Esophagus muscularis mucosa (tissue), 4 donors: ENCODE measurements at regions of chr4 and their contacts with region 1.

Region 1: DNA sequence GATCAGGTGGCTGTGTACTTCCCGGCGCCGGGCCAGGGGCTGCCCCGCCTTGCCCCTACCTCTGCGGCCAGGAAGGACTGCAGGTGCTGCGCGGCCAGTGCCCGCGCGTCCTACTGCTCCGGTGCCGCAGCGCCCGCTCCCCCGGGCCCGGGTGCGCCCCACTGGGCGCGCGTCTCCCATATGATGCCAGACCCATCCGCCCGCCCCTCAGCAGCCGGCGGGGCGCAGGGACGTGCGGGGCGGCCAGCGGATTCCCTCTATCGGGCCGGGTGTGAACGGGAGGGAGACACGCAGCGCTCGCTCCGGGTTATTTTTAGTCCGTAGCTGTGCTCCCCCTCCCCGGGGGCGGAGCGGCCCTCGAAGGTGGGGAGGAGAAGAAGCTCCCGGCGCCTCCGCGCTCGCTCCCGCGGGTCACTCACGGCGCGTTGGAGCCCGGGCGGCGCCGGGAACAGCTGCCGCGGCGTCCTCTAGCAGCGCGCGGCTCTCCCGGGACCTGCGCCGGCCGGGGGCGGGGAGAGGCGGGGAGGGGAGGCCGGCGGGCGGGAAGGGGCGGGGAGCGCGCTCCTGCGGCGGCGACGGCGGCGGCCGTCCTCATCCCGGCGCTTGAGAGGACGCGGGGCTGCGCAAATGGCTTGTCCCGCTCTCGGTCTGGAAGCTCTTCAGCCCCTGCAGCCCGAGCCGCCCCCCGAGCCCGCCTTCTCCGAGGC is 103.6 kb downstream of the UCHL1 start:
- DNase-seq: no peak
- H3K4me3 ChIP-seq: peak overlapping the region; percentile 66 to 95 (median 90)
- H3K27ac ChIP-seq: peak overlapping the region; percentile 85 to 92 (median 88)
- H3K4me1 ChIP-seq: peaks cover 30 to 61% (median 56%) of the 10 kb centered on the region in 4 donors
- H3K27me3 ChIP-seq: no peaks in the 10 kb centered on the region
- CTCF ChIP-seq: peak in 2 of 3 experiments; percentile 3 to 5
- EP300 ChIP-seq: no peak
- POLR2A ChIP-seq: no peak

Region 2: DNA sequence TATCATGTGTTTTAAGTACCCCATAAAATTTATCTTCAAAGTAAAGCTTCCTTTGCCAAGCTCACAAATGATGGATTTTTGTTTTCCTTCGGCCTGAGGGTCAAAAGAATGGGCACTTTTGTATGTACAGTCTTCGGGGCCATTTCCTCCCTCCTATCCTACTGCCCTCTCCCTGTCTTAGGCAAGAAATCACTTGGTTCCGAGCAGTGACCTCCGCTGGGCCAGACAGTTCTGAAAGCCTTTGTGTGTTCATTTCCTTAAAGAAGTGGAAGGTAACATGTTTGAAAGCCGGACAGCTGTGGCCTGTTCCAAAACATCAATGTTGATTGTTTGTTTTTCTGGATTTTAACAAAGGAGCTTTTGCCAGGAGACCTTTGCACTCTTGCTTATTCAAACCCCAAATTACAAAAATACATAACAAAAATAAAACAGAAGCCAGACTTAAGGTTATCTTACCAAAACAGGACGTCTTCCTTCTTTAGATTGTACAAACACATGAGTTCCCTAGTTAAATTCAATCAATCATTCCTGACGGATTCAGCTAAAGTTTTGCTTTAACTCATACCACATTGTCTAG is 67.0 kb after region 1 on chr4:
- intact Hi-C with region 1: loop called (anchors 5 kb)
- DNase-seq: no peak
- H3K4me3 ChIP-seq: no peak overlapping the region
- H3K27ac ChIP-seq: peak overlapping the region; percentile 79 to 82 (median 80)
- H3K4me1 ChIP-seq: peaks cover 63 to 89% (median 82%) of the 10 kb centered on the region in 4 donors
- H3K27me3 ChIP-seq: no peaks in the 10 kb centered on the region
- CTCF ChIP-seq: no peak
- EP300 ChIP-seq: no peak
- POLR2A ChIP-seq: no peak

Region 3: DNA sequence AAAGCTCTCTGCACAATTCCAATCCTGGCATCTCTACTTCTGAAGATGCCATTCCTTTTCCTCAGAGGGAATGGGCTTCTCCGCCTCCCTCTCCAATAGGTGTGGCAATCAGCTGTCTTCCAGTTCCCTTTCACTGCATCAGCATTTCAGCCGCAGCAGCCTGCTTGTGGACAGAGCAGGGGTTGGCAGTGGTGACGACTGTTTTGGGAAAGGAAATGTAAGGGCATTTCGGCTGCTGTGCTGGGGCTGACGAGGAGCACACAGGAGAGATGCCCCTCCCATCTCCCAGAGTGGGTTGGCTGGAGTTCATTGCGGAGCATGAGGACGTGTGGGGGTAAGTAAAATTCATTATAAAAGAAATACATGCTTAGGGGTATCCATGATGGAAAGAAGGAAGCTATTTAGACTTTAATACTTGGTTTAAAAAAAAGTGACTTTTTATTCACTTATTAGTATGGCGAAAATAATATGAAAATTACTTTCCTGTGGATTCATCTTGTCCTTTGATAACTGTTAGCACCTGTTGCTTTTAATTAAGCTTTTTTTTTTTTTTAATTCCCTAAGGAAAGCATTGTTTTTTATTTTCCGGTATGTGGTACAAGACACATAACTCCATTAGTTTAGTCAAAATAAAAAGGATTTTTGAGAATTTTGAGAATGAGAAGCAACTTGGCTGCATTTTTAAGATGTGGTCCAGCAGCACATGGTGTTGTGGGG is 177.8 kb after region 1 on chr4 and contains the start of gene LIMCH1:
- intact Hi-C with region 1: loop called (anchors 5 kb)
- DNase-seq: peak; percentile 94
- H3K4me3 ChIP-seq: peak within 1 kb of the TSS; percentile 10 to 35 (median 28)
- H3K27ac ChIP-seq: peak within 1 kb of the TSS; percentile 69 to 78 (median 74)
- H3K4me1 ChIP-seq: peaks cover 53 to 67% (median 59%) of the 10 kb centered on the region in 4 donors
- H3K27me3 ChIP-seq: no peaks in the 10 kb centered on the region
- CTCF ChIP-seq: no peak
- EP300 ChIP-seq: no peak
- POLR2A ChIP-seq: no peak
- total RNA-seq, gene LIMCH1: 49.0 to 101 (median 72.1) TPM

Region 4: DNA sequence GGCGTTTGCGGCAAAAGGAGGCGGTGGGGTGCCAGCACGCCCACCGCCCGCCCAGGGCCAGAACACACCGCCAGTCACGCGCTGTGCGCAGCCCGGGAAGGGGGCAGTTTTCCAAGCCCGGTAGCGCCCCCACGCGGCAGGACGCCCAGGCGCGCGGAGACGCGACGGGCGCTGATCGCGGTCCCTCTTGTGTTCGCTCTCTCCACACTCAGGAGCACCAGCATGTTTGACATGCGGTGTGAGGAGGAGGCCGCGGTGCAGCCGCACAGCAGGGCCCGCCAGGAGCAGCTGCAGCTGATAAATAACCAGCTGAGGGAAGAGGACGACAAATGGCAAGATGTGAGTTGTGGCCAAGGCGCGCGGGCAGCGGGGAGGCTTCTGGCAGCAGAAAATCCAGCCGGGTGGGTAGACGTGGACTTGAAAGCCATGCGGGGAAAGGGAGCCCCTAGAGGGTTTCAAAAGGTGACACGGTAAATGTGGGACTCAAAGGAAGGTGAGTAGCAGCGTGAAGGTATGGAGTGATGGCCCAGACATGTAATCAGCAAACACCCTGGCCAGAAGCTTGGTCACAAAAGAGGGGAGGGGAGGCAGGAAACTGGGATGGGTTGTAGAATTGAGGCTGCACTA is 284.0 kb after region 1 on chr4:
- intact Hi-C with region 1: loop called (anchors 5 kb)
- DNase-seq: peak; percentile 96
- H3K4me3 ChIP-seq: peak overlapping the region; percentile 12 to 44 (median 32)
- H3K27ac ChIP-seq: no peak overlapping the region
- H3K4me1 ChIP-seq: peaks cover 10 to 32% (median 26%) of the 10 kb centered on the region in 4 donors
- H3K27me3 ChIP-seq: no peaks in the 10 kb centered on the region
- CTCF ChIP-seq: peak; percentile 87 to 95 (median 93)
- EP300 ChIP-seq: no peak
- POLR2A ChIP-seq: no peak